Dendritic cell treated with granulocyte-macrophage colony-stimulating factor and Interleukin-4, amounts not matched to agents 40 ng/mL and 50 ng/mL, for 4 days (primary cell): ENCODE measurements at regions of chr12 and their contacts with region 1.

Region 1: GRCh38 chr12:40107098-40107802 is 1.4 kb upstream of the SLC2A13 start:
- H3K4me3 Mint-ChIP-seq: peak overlapping the region; percentile 17
- H3K27ac Mint-ChIP-seq: no peak overlapping the region
- H3K4me1 Mint-ChIP-seq: peaks cover 30% of the 10 kb centered on the region
- H3K27me3 Mint-ChIP-seq: peaks cover 35% of the 10 kb centered on the region

Region 2: GRCh38 chr12:39764944-39765560 is 342.2 kb before region 1 on chr12:
- intact Hi-C with region 1: loop called (anchors 5 kb)
- H3K4me3 Mint-ChIP-seq: no peak overlapping the region
- H3K27ac Mint-ChIP-seq: no peak overlapping the region
- H3K4me1 Mint-ChIP-seq: no peaks in the 10 kb centered on the region
- H3K27me3 Mint-ChIP-seq: no peaks in the 10 kb centered on the region

Region 3: DNA sequence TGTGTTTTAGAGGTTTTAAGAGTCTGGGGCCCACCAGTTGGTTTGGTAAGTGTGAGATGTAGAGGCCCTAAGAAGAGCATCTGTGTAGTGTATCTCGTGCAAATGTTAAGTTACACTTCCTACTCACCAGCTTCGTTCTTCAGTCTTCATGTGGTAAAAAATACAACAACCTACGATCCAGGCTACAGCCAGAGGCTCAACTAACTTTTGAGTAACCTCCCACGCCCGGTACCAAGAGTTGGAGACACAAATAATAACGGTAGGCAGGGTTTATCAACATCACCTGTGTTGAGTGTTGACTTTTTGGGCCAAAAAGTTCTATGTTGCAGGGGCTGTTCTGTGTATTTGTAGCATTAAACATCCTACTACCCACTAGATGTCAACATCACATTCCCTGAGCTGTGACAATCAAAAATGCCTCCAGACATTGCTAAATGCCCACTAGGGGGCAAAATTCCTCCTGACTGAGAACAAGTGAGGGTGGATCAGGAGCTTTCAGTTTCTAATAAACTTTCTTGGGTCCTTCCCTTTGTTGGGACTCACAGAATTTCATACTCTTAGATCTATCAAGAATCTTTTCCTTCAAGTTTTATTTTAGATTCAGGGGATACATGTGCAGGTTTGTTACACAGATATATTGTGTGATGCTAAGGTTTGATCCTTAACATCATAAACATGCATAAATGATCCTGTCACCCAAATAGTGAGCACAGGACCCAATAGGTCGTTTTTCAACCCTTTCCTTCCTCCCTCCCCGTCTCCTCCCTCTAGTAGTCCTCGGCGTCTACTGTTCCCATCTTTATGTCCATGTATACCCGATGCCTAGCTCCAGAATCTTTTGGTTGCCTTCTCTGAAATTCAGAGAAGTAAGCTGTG is 96.1 kb before region 1 on chr12:
- intact Hi-C with region 1: loop called (anchors 1 kb)
- H3K4me3 Mint-ChIP-seq: peak overlapping the region; percentile 52
- H3K27ac Mint-ChIP-seq: no peak overlapping the region
- H3K4me1 Mint-ChIP-seq: peaks cover 8% of the 10 kb centered on the region
- H3K27me3 Mint-ChIP-seq: no peaks in the 10 kb centered on the region